ENCODE measurements at regions of chr11 and their contacts with region 1.

Region 1: GRCh38 chr11:119673759-119674336 is 55.2 kb downstream of the NECTIN1 start:
- DNase-seq: peak; percentile 93
- H3K4me3 ChIP-seq: peak overlapping the region; percentile 20
- H3K27ac ChIP-seq: peak overlapping the region; percentile 77
- H3K4me1 ChIP-seq: peaks cover 41% of the 10 kb centered on the region
- CTCF ChIP-seq: peak; percentile 75

Region 2: DNA sequence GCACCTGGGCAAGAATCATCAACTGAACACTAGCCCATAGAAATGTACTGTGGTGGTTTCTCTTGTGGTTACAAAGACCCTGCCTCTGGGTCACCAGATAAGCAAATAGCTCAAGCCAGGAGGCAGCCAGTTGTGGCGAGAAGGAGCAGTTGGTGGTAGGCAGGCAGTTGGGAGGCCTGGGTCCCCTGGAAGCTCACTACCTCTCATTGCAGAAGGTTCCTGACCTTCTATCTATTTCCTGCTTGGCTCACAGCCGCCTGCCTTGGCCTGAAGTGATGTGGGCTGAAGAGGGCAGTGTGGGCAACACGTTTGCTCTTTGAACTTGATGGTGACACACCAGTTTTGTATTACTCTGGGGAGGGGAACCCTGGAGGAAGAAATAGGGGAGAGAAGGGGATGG is 20.5 kb after region 1 on chr11:
- CTCF ChIA-PET with region 1: interaction called, 6 read pairs
- POLR2A ChIA-PET with region 1: interaction called, 10 read pairs
- intact Hi-C with region 1: no loop called
- DNase-seq: peak; percentile 47
- H3K4me3 ChIP-seq: no peak overlapping the region
- H3K27ac ChIP-seq: no peak overlapping the region
- H3K4me1 ChIP-seq: peaks cover 16% of the 10 kb centered on the region
- CTCF ChIP-seq: peak; percentile 45; the same call in 1 of the 2 replicates

Measured in OCI-LY7 (cell line).